ENCODE measurements at regions of chrX and their contacts with region 1.

Region 1: DNA sequence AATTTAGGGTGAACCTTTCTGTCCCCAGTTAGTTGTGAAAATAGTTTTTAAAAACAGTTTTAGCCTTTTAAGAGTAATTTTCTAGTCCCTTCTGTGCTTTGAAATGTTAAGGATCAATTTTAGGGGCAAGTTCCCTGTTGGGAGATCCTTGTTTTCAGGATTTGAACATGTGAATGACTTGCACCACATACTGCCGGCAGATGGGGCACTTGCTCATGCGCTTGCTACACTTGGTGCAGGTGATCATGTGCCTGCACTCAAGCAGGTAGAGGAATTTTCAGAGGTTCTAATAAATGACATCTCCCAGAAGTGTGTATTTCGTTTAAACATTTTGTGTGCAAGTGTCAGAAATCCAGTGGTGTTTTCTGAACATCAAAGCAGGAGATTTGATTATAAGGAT is 195.9 kb downstream of the CHM start:
- DNase-seq: peak; percentile 57
- ATAC-seq: peak; percentile 59
- H3K4me3 ChIP-seq: no peak overlapping the region
- H3K27ac ChIP-seq: no peak overlapping the region
- H3K4me1 ChIP-seq: no peaks in the 10 kb centered on the region
- H3K27me3 ChIP-seq: no peaks in the 10 kb centered on the region
- CTCF ChIP-seq: peak; percentile 72

Region 2: GRCh38 chrX:85963736-85964135 is 112.3 kb after region 1 on chrX:
- CTCF ChIA-PET with region 1: no interaction called
- POLR2A ChIA-PET with region 1: no interaction called
- intact Hi-C with region 1: loop called (anchors 10 kb)
- DNase-seq: peak; percentile 75
- ATAC-seq: peak; percentile 92
- H3K4me3 ChIP-seq: no peak overlapping the region
- H3K27ac ChIP-seq: no peak overlapping the region
- H3K4me1 ChIP-seq: 0 out of 2 replicates have a peak, but pooled peaks cover 13% of the 10 kb centered on the region
- H3K27me3 ChIP-seq: no peaks in the 10 kb centered on the region
- CTCF ChIP-seq: no peak

Region 3: DNA sequence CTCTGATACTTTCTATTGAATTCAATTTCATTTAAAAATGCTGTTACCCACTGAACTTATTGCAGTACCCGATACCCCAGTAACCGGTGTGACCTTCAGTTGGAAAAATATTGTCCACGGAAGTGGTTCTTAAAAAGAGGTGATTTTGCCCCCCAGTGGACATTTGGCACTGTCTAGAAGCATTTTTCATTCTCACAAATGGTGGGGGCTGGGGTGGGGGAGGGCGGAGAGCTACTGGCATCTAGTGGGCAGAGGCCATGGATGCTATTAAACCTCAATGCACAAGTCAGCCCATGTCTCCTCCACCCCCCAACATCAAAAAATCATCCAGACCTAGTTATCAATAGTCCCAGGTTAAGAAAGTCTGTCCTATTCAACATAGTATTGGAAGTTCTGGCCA is 215.6 kb after region 1 on chrX:
- CTCF ChIA-PET with region 1: no interaction called
- POLR2A ChIA-PET with region 1: no interaction called
- intact Hi-C with region 1: loop called (anchors 1 kb)
- DNase-seq: peak; percentile 12
- ATAC-seq: peak; percentile 24; the same call in 1 of the 2 replicates
- H3K4me3 ChIP-seq: no peak overlapping the region
- H3K27ac ChIP-seq: no peak overlapping the region
- H3K4me1 ChIP-seq: no peaks in the 10 kb centered on the region
- H3K27me3 ChIP-seq: no peaks in the 10 kb centered on the region
- CTCF ChIP-seq: peak; percentile 27; the same call in 1 of the 2 replicates

Region 4: GRCh38 chrX:86133761-86134160 is 282.3 kb after region 1 on chrX:
- CTCF ChIA-PET with region 1: no interaction called
- POLR2A ChIA-PET with region 1: no interaction called
- intact Hi-C with region 1: loop called (anchors 5 kb)
- DNase-seq: no peak
- ATAC-seq: no peak
- H3K4me3 ChIP-seq: no peak overlapping the region
- H3K27ac ChIP-seq: no peak overlapping the region
- H3K4me1 ChIP-seq: no peaks in the 10 kb centered on the region
- H3K27me3 ChIP-seq: no peaks in the 10 kb centered on the region
- CTCF ChIP-seq: peak; percentile 58